Activated CD4-positive, alpha-beta T cell treated with anti-CD3 and anti-CD28 coated beads, Interleukin-2, amount 10 ng/mL, durations not matched to agents 24 days and 14 days (primary cell): ENCODE measurements at regions of chr3 and their contacts with region 1.

Region 1: GRCh38 chr3:37174532-37175126 is at the start of gene LRRFIP2:
- DNase-seq: peak; percentile 61
- H3K4me3 Mint-ChIP-seq: peak within 1 kb of the TSS; percentile 91
- H3K27ac Mint-ChIP-seq: peak within 1 kb of the TSS; percentile 80
- H3K4me1 Mint-ChIP-seq: peaks cover 42% of the 10 kb centered on the region
- H3K27me3 Mint-ChIP-seq: no peaks in the 10 kb centered on the region
- total RNA-seq, gene LRRFIP2: 22.5 and 23.3 TPM in 2 replicates

Region 2: GRCh38 chr3:36969540-36970432 is 204.8 kb before region 1 on chr3:
- intact Hi-C with region 1: no loop called
- DNase-seq: peak; percentile 81
- H3K4me3 Mint-ChIP-seq: peak overlapping the region; percentile 21
- H3K27ac Mint-ChIP-seq: peak overlapping the region; percentile 71
- H3K4me1 Mint-ChIP-seq: peaks cover 23% of the 10 kb centered on the region
- H3K27me3 Mint-ChIP-seq: no peaks in the 10 kb centered on the region

Region 3: DNA sequence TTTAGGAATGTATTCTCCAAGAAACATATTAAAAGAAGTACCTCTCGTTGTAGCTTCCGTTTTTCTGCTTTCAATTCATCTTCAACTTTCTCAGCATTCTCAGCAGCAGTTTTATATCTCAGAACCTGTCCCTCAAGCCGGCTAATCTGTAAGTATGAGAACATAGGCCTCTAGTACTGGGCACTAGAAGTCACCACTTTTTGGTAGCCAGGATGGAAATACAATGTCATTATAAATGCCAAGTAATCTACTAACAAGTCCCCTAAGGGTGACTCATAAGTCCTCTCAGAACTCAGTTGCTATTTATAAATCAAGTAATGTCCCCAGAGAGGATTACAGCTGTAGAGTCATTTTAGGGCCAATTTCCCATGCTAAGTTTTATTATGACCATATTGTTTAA is 120.3 kb before region 1 on chr3:
- intact Hi-C with region 1: no loop called
- DNase-seq: no peak
- H3K4me3 Mint-ChIP-seq: no peak overlapping the region
- H3K27ac Mint-ChIP-seq: peak overlapping the region; percentile 80
- H3K4me1 Mint-ChIP-seq: peaks cover 13% of the 10 kb centered on the region
- H3K27me3 Mint-ChIP-seq: no peaks in the 10 kb centered on the region

Region 4: DNA sequence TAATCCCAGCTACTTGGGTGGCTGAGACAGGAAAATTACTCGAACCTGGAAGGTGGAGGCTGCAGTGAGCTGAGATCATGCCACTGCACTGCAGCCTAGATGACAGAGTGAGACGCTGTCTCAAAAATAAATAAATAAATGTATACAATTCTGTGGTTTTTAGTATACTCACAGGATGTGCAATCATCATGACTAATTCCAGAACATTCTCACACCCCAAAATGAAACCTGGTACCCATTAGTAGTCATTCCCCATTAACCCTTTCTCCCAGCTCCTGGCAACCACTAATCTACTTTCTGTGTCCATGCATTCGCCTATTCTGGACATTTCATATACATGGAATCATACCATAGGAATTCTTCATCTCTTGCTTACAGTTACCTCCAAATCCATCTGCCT is 44.8 kb before region 1 on chr3:
- intact Hi-C with region 1: loop called (anchors 1 kb)
- DNase-seq: no peak
- H3K4me3 Mint-ChIP-seq: no peak overlapping the region
- H3K27ac Mint-ChIP-seq: no peak overlapping the region
- H3K4me1 Mint-ChIP-seq: peaks cover 10% of the 10 kb centered on the region
- H3K27me3 Mint-ChIP-seq: no peaks in the 10 kb centered on the region

Region 5: GRCh38 chr3:37163262-37164015 is 11.2 kb before region 1 on chr3:
- intact Hi-C with region 1: loop called (anchors 1 kb)
- DNase-seq: peak; percentile 67
- H3K4me3 Mint-ChIP-seq: peak overlapping the region; percentile 58
- H3K27ac Mint-ChIP-seq: peak overlapping the region; percentile 90
- H3K4me1 Mint-ChIP-seq: peaks cover 23% of the 10 kb centered on the region
- H3K27me3 Mint-ChIP-seq: no peaks in the 10 kb centered on the region

Region 6: DNA sequence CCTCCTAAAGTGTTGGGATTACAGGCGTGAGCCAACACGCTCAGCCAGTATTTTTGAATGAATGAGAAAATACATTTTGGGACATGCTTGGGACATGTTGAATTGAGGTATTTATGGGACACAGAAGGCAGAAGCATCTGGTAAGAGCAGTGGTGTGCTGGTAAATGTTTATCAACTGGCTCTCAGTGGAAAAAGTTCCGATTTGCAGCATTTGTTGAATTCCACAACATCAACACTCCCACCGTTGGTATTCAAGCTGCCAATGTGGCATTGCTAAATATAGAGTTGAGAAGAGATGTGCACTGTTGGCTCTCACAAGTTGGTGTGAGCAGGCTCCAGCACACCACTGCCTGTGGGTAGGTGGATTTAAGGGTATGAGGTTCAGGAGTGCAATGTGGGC is 35.6 kb after region 1 on chr3:
- intact Hi-C with region 1: loop called (anchors 1 kb)
- DNase-seq: no peak
- H3K4me3 Mint-ChIP-seq: no peak overlapping the region
- H3K27ac Mint-ChIP-seq: no peak overlapping the region
- H3K4me1 Mint-ChIP-seq: no peaks in the 10 kb centered on the region
- H3K27me3 Mint-ChIP-seq: peaks cover 2% of the 10 kb centered on the region